T-cell (primary cell): ENCODE measurements at regions of chr4 and their contacts with region 1.

Region 1: DNA sequence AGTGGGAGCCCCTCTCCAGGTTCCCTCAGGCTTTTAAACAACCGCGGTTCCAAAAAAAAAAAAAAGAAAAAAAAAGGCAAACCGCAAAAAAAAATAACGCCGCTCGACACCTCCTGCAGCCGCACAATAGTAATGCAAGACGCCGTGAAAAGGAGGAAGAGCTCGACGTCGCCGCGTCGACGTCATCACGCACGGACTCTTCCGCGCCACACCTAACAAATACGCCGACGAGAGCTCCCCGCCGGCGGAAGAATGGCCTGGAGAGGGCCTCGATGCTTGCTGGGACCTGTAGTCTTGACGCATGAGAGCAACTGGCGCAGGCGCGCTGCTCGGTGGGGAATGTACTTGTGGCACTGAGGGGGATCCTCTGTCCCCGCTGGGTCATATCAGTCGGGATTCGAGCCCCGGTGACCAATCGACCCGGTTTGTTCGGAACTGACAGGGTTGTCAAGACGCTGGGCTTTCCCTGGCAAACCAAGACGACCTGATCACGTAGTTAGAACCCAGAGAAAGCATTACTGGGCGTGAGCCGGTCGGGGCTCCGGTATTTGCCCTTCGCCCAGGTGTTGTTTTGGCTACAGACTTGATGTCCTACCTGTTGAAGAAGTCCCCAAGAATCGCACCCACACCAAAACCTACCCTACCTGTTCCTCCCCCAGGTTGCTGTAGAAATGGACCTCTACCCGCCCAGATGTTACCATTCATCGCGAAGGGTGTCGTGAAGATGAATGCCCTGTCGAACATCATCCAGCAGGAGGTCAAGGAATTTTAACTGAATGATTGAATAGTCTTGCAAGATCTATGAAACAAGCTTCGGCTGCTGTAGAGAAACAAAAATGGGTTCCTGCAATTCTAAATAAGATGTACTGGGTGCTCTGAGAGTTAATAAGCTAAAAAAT is at the start of gene CBR4:
- DNase-seq: peak; percentile 88 to 99 (median 96)
- ATAC-seq: peak; percentile 95 to 97 (median 97)
- H3K4me3 ChIP-seq: peak within 1 kb of the TSS; percentile 69 to 94
- H3K4me3 Mint-ChIP-seq: peak within 1 kb of the TSS; percentile 89 to 97 (median 91)
- H3K27ac ChIP-seq: peak within 1 kb of the TSS; percentile 86
- H3K27ac Mint-ChIP-seq: peak within 1 kb of the TSS; percentile 91 to 94
- H3K4me1 ChIP-seq: peaks cover 15% of the 10 kb centered on the region in 2 experiments
- H3K4me1 Mint-ChIP-seq: peaks cover 36 to 54% (median 40%) of the 10 kb centered on the region in 3 donors
- H3K27me3 ChIP-seq: no peaks in the 10 kb centered on the region
- H3K27me3 Mint-ChIP-seq: no peaks in the 10 kb centered on the region
- total RNA-seq, gene CBR4: 13.8 to 24.3 (median 18.0) TPM

Region 2: GRCh38 chr4:168480931-168481611 is 529.3 kb before region 1 on chr4:
- CTCF ChIA-PET with region 1: interaction called, 3 to 10 read pairs
- POLR2A ChIA-PET with region 1: interaction called in 1 of 2 experiments, 5 read pairs
- DNase-seq: peak in 34 of 35 experiments; percentile 9 to 83 (median 42)
- ATAC-seq: peak; percentile 58 to 70 (median 64)
- H3K4me3 ChIP-seq: peak overlapping the region; percentile 94 to 97
- H3K4me3 Mint-ChIP-seq: peak overlapping the region; percentile 95 to 100 (median 99)
- H3K27ac ChIP-seq: peak overlapping the region; percentile 91
- H3K27ac Mint-ChIP-seq: peak overlapping the region; percentile 100
- H3K4me1 ChIP-seq: peaks cover 11 to 36% of the 10 kb centered on the region in 2 experiments
- H3K4me1 Mint-ChIP-seq: peaks cover 64 to 77% (median 74%) of the 10 kb centered on the region in 3 donors
- H3K27me3 ChIP-seq: no peaks in the 10 kb centered on the region
- H3K27me3 Mint-ChIP-seq: no peaks in the 10 kb centered on the region

Region 3: GRCh38 chr4:168981460-168981859 is 28.9 kb before region 1 on chr4:
- CTCF ChIA-PET with region 1: no interaction called
- POLR2A ChIA-PET with region 1: interaction called in 1 of 2 experiments, 12 read pairs
- DNase-seq: no peak
- ATAC-seq: no peak
- H3K4me3 ChIP-seq: no peak overlapping the region
- H3K4me3 Mint-ChIP-seq: no peak overlapping the region
- H3K27ac ChIP-seq: no peak overlapping the region
- H3K27ac Mint-ChIP-seq: no peak overlapping the region
- H3K4me1 ChIP-seq: no peaks in the 10 kb centered on the region
- H3K4me1 Mint-ChIP-seq: peaks cover 0 to 3% (median 0%) of the 10 kb centered on the region in 3 donors
- H3K27me3 ChIP-seq: no peaks in the 10 kb centered on the region
- H3K27me3 Mint-ChIP-seq: no peaks in the 10 kb centered on the region

Region 4: DNA sequence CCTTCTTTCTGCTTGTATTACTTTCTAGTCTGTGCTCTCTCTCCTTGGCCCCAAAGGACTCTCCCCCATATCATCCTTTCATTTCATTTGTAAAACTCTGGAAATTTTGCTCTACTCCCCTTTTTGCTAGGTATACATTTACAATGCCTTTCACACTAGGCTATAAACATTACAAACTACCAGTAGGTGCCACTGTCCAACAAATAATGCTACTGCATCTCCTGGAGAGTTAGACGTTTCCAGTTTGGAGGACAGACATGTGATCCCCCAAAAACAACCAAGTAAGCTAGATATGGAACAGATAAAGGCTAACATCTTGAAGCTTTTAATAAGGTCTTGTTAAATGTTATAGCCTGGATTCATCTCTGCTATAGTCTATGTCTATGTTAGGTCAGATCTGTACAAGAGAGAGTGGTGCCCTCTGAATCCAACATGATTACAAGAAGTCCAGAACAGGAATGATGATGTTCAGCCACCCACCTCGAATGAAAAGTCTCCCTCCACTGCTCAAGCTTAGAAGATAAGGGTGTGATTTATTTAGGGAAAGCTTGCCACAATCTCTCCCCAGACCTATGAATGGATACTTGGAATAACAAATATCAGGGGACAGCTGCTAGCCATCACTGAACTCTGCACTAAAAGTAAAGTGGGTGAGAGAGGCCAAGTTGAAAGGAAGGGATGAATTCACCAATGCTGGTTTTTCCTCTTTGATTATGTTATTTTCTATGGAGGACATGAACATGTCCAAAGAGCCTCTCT is 14.7 kb before region 1 on chr4:
- CTCF ChIA-PET with region 1: interaction called, 3 to 11 read pairs
- POLR2A ChIA-PET with region 1: interaction called, 3 to 8 read pairs
- DNase-seq: peak in 1 of 35 experiments; percentile 38
- ATAC-seq: peak in 1 of 4 experiments; percentile 61
- H3K4me3 ChIP-seq: no peak overlapping the region
- H3K4me3 Mint-ChIP-seq: no peak overlapping the region
- H3K27ac ChIP-seq: no peak overlapping the region
- H3K27ac Mint-ChIP-seq: no peak overlapping the region
- H3K4me1 ChIP-seq: no peaks in the 10 kb centered on the region
- H3K4me1 Mint-ChIP-seq: peaks cover 2 to 6% (median 6%) of the 10 kb centered on the region in 3 donors
- H3K27me3 ChIP-seq: no peaks in the 10 kb centered on the region
- H3K27me3 Mint-ChIP-seq: no peaks in the 10 kb centered on the region